PC-9 (cell line): ENCODE measurements at regions of chr21 and their contacts with region 1.

Region 1: DNA sequence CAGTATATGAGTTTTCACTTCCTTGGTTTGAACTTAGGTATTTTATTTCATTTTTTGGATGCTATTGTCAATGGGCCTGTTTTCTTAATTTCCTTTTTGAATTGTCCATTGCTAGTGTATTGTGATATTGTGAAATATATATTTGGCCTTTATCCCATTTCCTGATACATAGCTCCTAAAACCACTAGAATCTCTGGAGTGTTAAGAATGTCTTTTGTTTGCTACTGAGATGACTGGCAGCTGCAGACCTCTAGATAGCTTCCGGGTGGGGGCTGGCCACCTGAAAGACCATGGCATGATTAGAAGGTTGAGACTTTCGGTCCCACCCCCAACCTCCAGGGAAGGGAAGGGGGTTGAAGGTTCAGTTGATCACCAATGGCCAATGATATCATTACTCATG is 245.4 kb downstream of the KCNJ6 start:
- DNase-seq: peak; percentile 63 to 83
- H3K4me3 ChIP-seq: no peak overlapping the region
- H3K27ac ChIP-seq: peak overlapping the region; percentile 72
- H3K4me1 ChIP-seq: peaks cover 28% of the 10 kb centered on the region
- H3K27me3 ChIP-seq: no peaks in the 10 kb centered on the region
- CTCF ChIP-seq: no peak

Region 2: DNA sequence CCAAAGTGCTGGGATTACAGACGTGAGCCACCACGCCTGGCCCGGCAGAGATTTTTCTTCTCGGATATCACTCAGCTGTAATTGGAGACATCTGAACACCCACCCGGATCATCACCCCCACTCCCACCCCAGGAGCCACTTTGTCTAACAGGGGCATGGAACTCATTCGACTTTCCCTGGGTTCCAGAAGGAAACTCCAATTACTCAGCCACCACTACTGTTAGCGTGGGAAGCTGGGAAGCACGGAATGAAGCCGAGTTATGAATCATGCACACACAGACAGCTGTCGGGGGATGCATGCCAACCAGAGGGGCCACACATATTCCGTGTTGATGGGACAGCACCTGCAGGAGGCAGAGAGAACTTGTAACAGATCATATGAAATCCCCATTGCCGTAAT is 789.7 kb before region 1 on chr21:
- CTCF ChIA-PET with region 1: no interaction called
- POLR2A ChIA-PET with region 1: no interaction called
- intact Hi-C with region 1: no loop called
- DNase-seq: no peak
- H3K4me3 ChIP-seq: no peak overlapping the region
- H3K27ac ChIP-seq: no peak overlapping the region
- H3K4me1 ChIP-seq: no peaks in the 10 kb centered on the region
- H3K27me3 ChIP-seq: no peaks in the 10 kb centered on the region
- CTCF ChIP-seq: no peak

Region 3: GRCh38 chr21:36909901-36910561 is 760.9 kb before region 1 on chr21:
- CTCF ChIA-PET with region 1: no interaction called
- POLR2A ChIA-PET with region 1: no interaction called
- intact Hi-C with region 1: no loop called
- DNase-seq: peak; percentile 40 to 97
- H3K4me3 ChIP-seq: no peak overlapping the region
- H3K27ac ChIP-seq: peak overlapping the region; percentile 86
- H3K4me1 ChIP-seq: peaks cover 16% of the 10 kb centered on the region
- H3K27me3 ChIP-seq: no peaks in the 10 kb centered on the region
- CTCF ChIP-seq: no peak

Region 4: GRCh38 chr21:37658817-37659458 is 11.9 kb before region 1 on chr21:
- CTCF ChIA-PET with region 1: no interaction called
- POLR2A ChIA-PET with region 1: no interaction called
- intact Hi-C with region 1: loop called (anchors 1 kb)
- DNase-seq: peak; percentile 73 to 91
- H3K4me3 ChIP-seq: no peak overlapping the region
- H3K27ac ChIP-seq: peak overlapping the region; percentile 84
- H3K4me1 ChIP-seq: peaks cover 28% of the 10 kb centered on the region
- H3K27me3 ChIP-seq: no peaks in the 10 kb centered on the region
- CTCF ChIP-seq: no peak; the same call in 1 of the 2 replicates